ENCODE measurements at regions of chr15 and their contacts with region 1.

Region 1: GRCh38 chr15:41972253-41973242 is at the start of gene EHD4:
- DNase-seq: peak; percentile 98
- ATAC-seq: peak; percentile 80
- H3K4me3 Mint-ChIP-seq: peak within 1 kb of the TSS; percentile 86
- H3K27ac Mint-ChIP-seq: peak within 1 kb of the TSS; percentile 94
- H3K4me1 Mint-ChIP-seq: peaks cover 53% of the 10 kb centered on the region
- H3K27me3 Mint-ChIP-seq: peaks cover 8% of the 10 kb centered on the region
- total RNA-seq, gene EHD4: 34.7 to 35.7 TPM

Region 2: GRCh38 chr15:41354371-41354770 is 618.2 kb before region 1 on chr15:
- CTCF ChIA-PET with region 1: no interaction called
- POLR2A ChIA-PET with region 1: no interaction called
- intact Hi-C with region 1: no loop called
- DNase-seq: no peak
- ATAC-seq: no peak
- H3K4me3 Mint-ChIP-seq: no peak overlapping the region
- H3K27ac Mint-ChIP-seq: no peak overlapping the region
- H3K4me1 Mint-ChIP-seq: no peaks in the 10 kb centered on the region
- H3K27me3 Mint-ChIP-seq: no peaks in the 10 kb centered on the region

Region 3: GRCh38 chr15:41660235-41661077 is 312.1 kb before region 1 on chr15 and contains the start of gene MGA:
- CTCF ChIA-PET with region 1: no interaction called
- POLR2A ChIA-PET with region 1: interaction called, 8 read pairs
- intact Hi-C with region 1: loop called in 1 of 2 experiments (anchors 2 kb)
- DNase-seq: peak; percentile 94
- ATAC-seq: peak; percentile 89
- H3K4me3 Mint-ChIP-seq: peak within 1 kb of the TSS; percentile 92
- H3K27ac Mint-ChIP-seq: peak within 1 kb of the TSS; percentile 95
- H3K4me1 Mint-ChIP-seq: peaks cover 42% of the 10 kb centered on the region
- H3K27me3 Mint-ChIP-seq: peaks cover 7% of the 10 kb centered on the region
- total RNA-seq, gene MGA: 33.7 to 39.3 TPM

Region 4: DNA sequence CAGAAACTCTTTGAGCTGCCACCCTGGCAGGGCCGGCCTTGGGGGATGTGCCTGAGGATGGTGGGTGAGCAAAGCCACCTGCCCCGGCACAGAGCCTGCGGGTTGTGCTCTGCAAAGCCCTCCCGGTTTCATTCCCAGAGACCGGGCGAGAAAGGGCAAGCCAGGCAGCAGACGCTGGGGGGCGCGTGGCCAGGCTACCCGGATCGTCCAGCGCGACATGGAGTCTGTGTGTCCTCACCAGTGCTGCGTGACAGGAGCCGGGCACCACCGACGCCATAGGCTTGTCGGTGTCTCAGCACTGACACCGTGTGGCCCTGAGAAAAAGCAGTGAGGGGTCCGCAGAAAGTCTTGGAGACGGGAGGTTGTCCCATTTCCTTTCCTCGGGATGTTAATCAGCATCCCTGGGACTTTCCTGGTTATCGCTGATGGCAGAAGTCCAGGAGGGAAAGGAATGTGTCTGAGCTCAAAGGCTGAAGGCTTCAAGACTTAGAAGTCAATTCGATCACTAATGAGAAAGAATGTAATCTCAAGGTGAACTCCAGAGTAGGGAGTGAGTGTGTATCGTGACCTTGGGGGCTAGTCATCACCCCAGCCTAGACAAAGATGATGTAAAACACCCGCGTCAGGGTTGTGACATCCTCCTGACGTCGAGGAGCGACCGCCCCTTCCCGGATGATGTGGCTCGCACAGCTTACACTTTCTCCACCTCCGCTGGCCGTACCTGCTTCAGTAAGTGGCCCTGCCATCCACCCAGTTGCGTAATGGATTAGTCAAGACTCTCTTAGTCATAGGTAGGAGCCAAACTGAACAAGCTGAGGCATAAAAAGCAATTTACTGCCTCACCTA is 84.6 kb after region 1 on chr15:
- CTCF ChIA-PET with region 1: no interaction called
- POLR2A ChIA-PET with region 1: interaction called, 10 read pairs
- intact Hi-C with region 1: loop called (anchors 1 to 5 kb)
- DNase-seq: peak; percentile 83
- ATAC-seq: peak; percentile 86
- H3K4me3 Mint-ChIP-seq: peak overlapping the region; percentile 49
- H3K27ac Mint-ChIP-seq: peak overlapping the region; percentile 52
- H3K4me1 Mint-ChIP-seq: peaks cover 7% of the 10 kb centered on the region
- H3K27me3 Mint-ChIP-seq: peaks cover 9% of the 10 kb centered on the region

Region 5: GRCh38 chr15:42207674-42208579 is 235.4 kb after region 1 on chr15 and contains the start of gene VPS39:
- CTCF ChIA-PET with region 1: interaction called, 3 read pairs
- POLR2A ChIA-PET with region 1: interaction called, 3 read pairs
- intact Hi-C with region 1: loop called in 1 of 2 experiments (anchors 5 kb)
- DNase-seq: peak; percentile 91
- ATAC-seq: peak; percentile 98
- H3K4me3 Mint-ChIP-seq: peak within 1 kb of the TSS; percentile 99
- H3K27ac Mint-ChIP-seq: peak within 1 kb of the TSS; percentile 97
- H3K4me1 Mint-ChIP-seq: peaks cover 32% of the 10 kb centered on the region
- H3K27me3 Mint-ChIP-seq: no peaks in the 10 kb centered on the region
- total RNA-seq, gene VPS39: 49.5 to 56.2 TPM